ENCODE measurements at regions of chr15 and their contacts with region 1.

Region 1: GRCh38 chr15:62125773-62126172 is 39.3 kb downstream of the C2CD4B start:
- DNase-seq: no peak
- H3K4me3 Mint-ChIP-seq: no peak overlapping the region
- H3K27ac Mint-ChIP-seq: peak overlapping the region; percentile 2
- H3K4me1 Mint-ChIP-seq: peaks cover 61% of the 10 kb centered on the region
- H3K27me3 Mint-ChIP-seq: peaks cover 10% of the 10 kb centered on the region

Region 2: GRCh38 chr15:62142731-62143130 is 17.0 kb after region 1 on chr15:
- CTCF ChIA-PET with region 1: interaction called, 5 read pairs
- POLR2A ChIA-PET with region 1: interaction called, 14 read pairs
- DNase-seq: no peak
- H3K4me3 Mint-ChIP-seq: no peak overlapping the region
- H3K27ac Mint-ChIP-seq: no peak overlapping the region
- H3K4me1 Mint-ChIP-seq: peaks cover 13% of the 10 kb centered on the region
- H3K27me3 Mint-ChIP-seq: no peaks in the 10 kb centered on the region

Measured in activated CD4-positive, alpha-beta memory T cell treated with anti-CD3 and anti-CD28 coated beads, Interleukin-2, amount 10 ng/mL, durations not matched to agents 7 days and 5 days (primary cell).